ENCODE measurements at regions of chr2 and their contacts with region 1.

Region 1: GRCh38 chr2:47767880-47768609 is 14.9 kb upstream of the MSH6 start:
- DNase-seq: peak; percentile 54
- H3K4me3 ChIP-seq: peak overlapping the region; percentile 60
- H3K27ac ChIP-seq: no peak overlapping the region
- H3K4me1 ChIP-seq: no peaks in the 10 kb centered on the region
- H3K27me3 ChIP-seq: peaks cover 8% of the 10 kb centered on the region; the same call in 1 of the 2 replicates

Region 2: GRCh38 chr2:47452761-47453160 is 315.3 kb before region 1 on chr2:
- in situ Hi-C with region 1: loop called (anchors 5 kb)
- DNase-seq: no peak
- H3K4me3 ChIP-seq: no peak overlapping the region
- H3K27ac ChIP-seq: no peak overlapping the region
- H3K4me1 ChIP-seq: no peaks in the 10 kb centered on the region
- H3K27me3 ChIP-seq: no peaks in the 10 kb centered on the region

Measured in GM23248 (cell line).